ENCODE measurements at regions of chr2 and their contacts with region 1.

Region 1: DNA sequence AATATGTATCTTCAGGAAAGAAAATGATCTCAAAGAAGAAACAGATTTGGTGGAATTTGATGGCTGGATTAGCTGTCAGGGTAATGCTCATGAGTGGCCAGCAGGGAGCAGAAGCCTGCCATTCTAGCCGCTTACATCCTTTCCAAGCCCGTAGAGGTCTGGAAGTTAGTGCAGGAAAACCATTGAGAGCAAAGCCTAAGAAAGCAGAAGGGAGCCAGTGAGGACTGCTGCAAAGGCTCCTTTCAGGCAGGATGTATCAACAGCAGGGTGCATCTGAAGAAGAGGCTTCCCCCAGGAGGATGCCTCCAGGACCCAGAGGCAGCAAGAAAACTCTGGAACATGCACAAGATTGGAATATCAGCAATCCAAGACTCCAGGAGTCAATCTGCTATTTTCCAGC is 22.9 kb upstream of the LBH start:
- DNase-seq: peak; percentile 57
- ATAC-seq: peak; percentile 77
- H3K4me3 Mint-ChIP-seq: no peak overlapping the region
- H3K27ac Mint-ChIP-seq: peak overlapping the region; percentile 33
- H3K4me1 Mint-ChIP-seq: peaks cover 17% of the 10 kb centered on the region
- H3K27me3 Mint-ChIP-seq: no peaks in the 10 kb centered on the region
- CTCF ChIP-seq: peak; percentile 98

Region 2: GRCh38 chr2:30193104-30193681 is 15.3 kb before region 1 on chr2:
- CTCF ChIA-PET with region 1: interaction called, 14 read pairs
- POLR2A ChIA-PET with region 1: no interaction called
- intact Hi-C with region 1: no loop called
- DNase-seq: no peak
- ATAC-seq: no peak
- H3K4me3 Mint-ChIP-seq: no peak overlapping the region
- H3K27ac Mint-ChIP-seq: no peak overlapping the region
- H3K4me1 Mint-ChIP-seq: peaks cover 6% of the 10 kb centered on the region
- H3K27me3 Mint-ChIP-seq: no peaks in the 10 kb centered on the region
- CTCF ChIP-seq: no peak

Region 3: GRCh38 chr2:30231212-30231995 is 23.0 kb after region 1 on chr2 and contains the start of gene LBH:
- CTCF ChIA-PET with region 1: interaction called, 156 read pairs
- POLR2A ChIA-PET with region 1: interaction called, 8 read pairs
- intact Hi-C with region 1: no loop called
- DNase-seq: peak; percentile 93
- ATAC-seq: peak; percentile 44
- H3K4me3 Mint-ChIP-seq: peak within 1 kb of the TSS; percentile 78
- H3K27ac Mint-ChIP-seq: peak within 1 kb of the TSS; percentile 97
- H3K4me1 Mint-ChIP-seq: peaks cover 63% of the 10 kb centered on the region
- H3K27me3 Mint-ChIP-seq: no peaks in the 10 kb centered on the region
- CTCF ChIP-seq: no peak
- total RNA-seq, gene LBH: 127 to 130 TPM

Region 4: GRCh38 chr2:30266051-30266621 is 57.7 kb after region 1 on chr2:
- CTCF ChIA-PET with region 1: interaction called, 14 read pairs
- POLR2A ChIA-PET with region 1: no interaction called
- intact Hi-C with region 1: no loop called
- DNase-seq: peak; percentile 73
- ATAC-seq: peak; percentile 57
- H3K4me3 Mint-ChIP-seq: peak overlapping the region; percentile 76
- H3K27ac Mint-ChIP-seq: peak overlapping the region; percentile 99
- H3K4me1 Mint-ChIP-seq: peaks cover 81% of the 10 kb centered on the region
- H3K27me3 Mint-ChIP-seq: no peaks in the 10 kb centered on the region
- CTCF ChIP-seq: no peak

Region 5: GRCh38 chr2:30421604-30422443 is 213.4 kb after region 1 on chr2:
- CTCF ChIA-PET with region 1: no interaction called
- POLR2A ChIA-PET with region 1: no interaction called
- intact Hi-C with region 1: no loop called
- DNase-seq: peak; percentile 65
- ATAC-seq: peak; percentile 49
- H3K4me3 Mint-ChIP-seq: peak overlapping the region; percentile 70
- H3K27ac Mint-ChIP-seq: peak overlapping the region; percentile 96
- H3K4me1 Mint-ChIP-seq: peaks cover 36% of the 10 kb centered on the region
- H3K27me3 Mint-ChIP-seq: no peaks in the 10 kb centered on the region
- CTCF ChIP-seq: no peak

Region 6: DNA sequence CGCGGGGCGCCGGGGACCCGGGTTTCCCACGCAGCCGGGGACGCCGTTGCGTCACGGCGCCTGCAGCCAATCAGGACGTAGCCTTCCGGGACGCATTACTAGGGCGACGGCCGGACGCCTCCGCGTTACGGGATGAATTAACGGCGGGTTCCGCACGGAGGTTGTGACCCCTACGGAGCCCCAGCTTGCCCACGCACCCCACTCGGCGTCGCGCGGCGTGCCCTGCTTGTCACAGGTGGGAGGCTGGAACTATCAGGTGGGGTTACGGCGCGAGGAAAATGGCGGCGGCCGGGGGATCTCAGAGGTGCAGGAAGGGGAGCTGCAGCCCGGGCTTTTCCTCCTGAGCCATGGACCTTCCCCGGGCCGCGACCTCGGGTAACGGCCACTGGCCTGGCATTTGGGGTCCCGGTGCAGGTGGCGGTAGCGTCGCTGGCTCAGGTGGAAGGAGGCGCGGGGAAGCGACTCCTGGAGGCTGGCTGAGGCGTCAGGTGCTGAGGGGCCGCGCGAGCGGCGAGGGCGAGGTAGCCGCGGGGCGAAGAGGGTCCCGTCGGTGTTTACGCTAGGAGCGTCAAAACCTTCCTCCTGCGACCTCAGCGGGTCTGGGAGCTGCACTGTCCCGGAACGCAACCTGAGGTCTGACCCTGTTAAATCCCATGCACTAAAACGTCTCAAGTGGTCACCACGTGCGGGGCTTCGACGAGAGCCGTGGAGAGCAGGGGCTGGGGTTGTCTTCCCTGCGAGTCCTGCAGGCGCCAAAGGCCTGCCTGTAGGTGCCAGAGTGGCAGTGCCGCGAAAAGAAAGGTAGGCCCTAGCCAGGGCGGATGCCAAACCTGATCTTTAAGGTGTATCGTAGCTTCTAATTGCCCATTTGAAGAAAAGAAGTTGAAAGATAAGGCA is 238.9 kb after region 1 on chr2 and contains the start of gene LCLAT1:
- CTCF ChIA-PET with region 1: interaction called, 14 read pairs
- POLR2A ChIA-PET with region 1: no interaction called
- intact Hi-C with region 1: no loop called
- DNase-seq: peak; percentile 90
- ATAC-seq: peak; percentile 88
- H3K4me3 Mint-ChIP-seq: peak within 1 kb of the TSS; percentile 89
- H3K27ac Mint-ChIP-seq: peak within 1 kb of the TSS; percentile 97
- H3K4me1 Mint-ChIP-seq: peaks cover 38% of the 10 kb centered on the region
- H3K27me3 Mint-ChIP-seq: no peaks in the 10 kb centered on the region
- CTCF ChIP-seq: no peak
- total RNA-seq, gene LCLAT1: 19.0 to 20.5 TPM

Region 7: DNA sequence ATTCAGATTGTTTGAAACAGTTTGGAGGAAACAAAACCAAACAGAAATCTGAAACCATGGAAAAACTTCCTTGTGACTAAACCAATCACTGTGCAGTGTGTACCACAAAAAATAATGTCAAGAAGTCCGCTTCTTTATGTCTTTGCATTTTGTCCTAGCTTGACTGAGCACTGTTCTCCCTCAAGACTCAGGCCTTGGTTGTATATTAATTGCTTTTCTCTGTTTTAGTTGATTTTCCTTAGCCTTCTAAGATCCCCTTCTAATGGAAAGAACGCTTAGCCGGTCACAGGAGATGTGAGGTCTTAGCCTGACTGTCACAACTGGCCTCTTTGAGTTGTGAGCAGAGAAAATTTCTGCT is 295.2 kb after region 1 on chr2:
- CTCF ChIA-PET with region 1: no interaction called
- POLR2A ChIA-PET with region 1: no interaction called
- intact Hi-C with region 1: no loop called
- DNase-seq: no peak
- ATAC-seq: peak; percentile 40
- H3K4me3 Mint-ChIP-seq: no peak overlapping the region
- H3K27ac Mint-ChIP-seq: peak overlapping the region; percentile 86
- H3K4me1 Mint-ChIP-seq: peaks cover 35% of the 10 kb centered on the region
- H3K27me3 Mint-ChIP-seq: no peaks in the 10 kb centered on the region
- CTCF ChIP-seq: no peak

Region 8: GRCh38 chr2:30548386-30548785 is 339.9 kb after region 1 on chr2:
- CTCF ChIA-PET with region 1: no interaction called
- POLR2A ChIA-PET with region 1: no interaction called
- intact Hi-C with region 1: no loop called
- DNase-seq: no peak
- ATAC-seq: no peak
- H3K4me3 Mint-ChIP-seq: no peak overlapping the region
- H3K27ac Mint-ChIP-seq: no peak overlapping the region
- H3K4me1 Mint-ChIP-seq: peaks cover 1% of the 10 kb centered on the region
- H3K27me3 Mint-ChIP-seq: no peaks in the 10 kb centered on the region
- CTCF ChIP-seq: no peak

Region 9: DNA sequence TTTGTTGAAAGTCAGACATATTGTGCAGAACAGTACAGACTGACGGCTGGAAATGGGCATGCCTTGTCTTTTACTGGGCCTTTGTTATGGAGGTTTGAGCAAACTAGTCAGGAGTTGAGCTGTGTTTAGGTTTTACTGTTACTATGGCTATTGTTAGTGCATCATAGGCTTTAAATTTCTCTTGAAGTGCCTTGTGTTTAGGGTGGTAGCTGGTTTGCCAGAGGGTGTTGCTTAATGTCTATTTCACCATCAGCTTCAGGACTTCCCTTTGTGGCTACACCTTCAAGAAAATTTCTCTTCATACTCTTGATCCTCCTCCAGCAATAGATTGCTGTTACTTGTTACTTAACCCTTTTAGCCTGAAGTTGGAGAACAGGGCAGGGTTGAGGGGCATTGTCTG is 494.2 kb after region 1 on chr2:
- CTCF ChIA-PET with region 1: interaction called, 185 read pairs
- POLR2A ChIA-PET with region 1: interaction called, 3 read pairs
- intact Hi-C with region 1: loop called (anchors 1 kb)
- DNase-seq: no peak
- ATAC-seq: no peak
- H3K4me3 Mint-ChIP-seq: no peak overlapping the region
- H3K27ac Mint-ChIP-seq: no peak overlapping the region
- H3K4me1 Mint-ChIP-seq: no peaks in the 10 kb centered on the region
- H3K27me3 Mint-ChIP-seq: no peaks in the 10 kb centered on the region
- CTCF ChIP-seq: no peak

Measured in activated CD8-positive, alpha-beta T cell treated with anti-CD3 and anti-CD28 coated beads for 36 hours (primary cell).